ENCODE measurements at regions of chr3 and their contacts with region 1.

Region 1: GRCh38 chr3:32570421-32571191 is at the start of gene DYNC1LI1:
- DNase-seq: peak; percentile 81 to 96
- H3K4me3 ChIP-seq: peak within 1 kb of the TSS; percentile 89 to 92
- H3K27ac ChIP-seq: peak within 1 kb of the TSS; percentile 96 to 100
- H3K4me1 ChIP-seq: peaks cover 0 to 7% of the 10 kb centered on the region in 2 donors
- H3K27me3 ChIP-seq: no peaks in the 10 kb centered on the region
- CTCF ChIP-seq: no peak
- total RNA-seq, gene DYNC1LI1: 22.1 TPM

Region 2: DNA sequence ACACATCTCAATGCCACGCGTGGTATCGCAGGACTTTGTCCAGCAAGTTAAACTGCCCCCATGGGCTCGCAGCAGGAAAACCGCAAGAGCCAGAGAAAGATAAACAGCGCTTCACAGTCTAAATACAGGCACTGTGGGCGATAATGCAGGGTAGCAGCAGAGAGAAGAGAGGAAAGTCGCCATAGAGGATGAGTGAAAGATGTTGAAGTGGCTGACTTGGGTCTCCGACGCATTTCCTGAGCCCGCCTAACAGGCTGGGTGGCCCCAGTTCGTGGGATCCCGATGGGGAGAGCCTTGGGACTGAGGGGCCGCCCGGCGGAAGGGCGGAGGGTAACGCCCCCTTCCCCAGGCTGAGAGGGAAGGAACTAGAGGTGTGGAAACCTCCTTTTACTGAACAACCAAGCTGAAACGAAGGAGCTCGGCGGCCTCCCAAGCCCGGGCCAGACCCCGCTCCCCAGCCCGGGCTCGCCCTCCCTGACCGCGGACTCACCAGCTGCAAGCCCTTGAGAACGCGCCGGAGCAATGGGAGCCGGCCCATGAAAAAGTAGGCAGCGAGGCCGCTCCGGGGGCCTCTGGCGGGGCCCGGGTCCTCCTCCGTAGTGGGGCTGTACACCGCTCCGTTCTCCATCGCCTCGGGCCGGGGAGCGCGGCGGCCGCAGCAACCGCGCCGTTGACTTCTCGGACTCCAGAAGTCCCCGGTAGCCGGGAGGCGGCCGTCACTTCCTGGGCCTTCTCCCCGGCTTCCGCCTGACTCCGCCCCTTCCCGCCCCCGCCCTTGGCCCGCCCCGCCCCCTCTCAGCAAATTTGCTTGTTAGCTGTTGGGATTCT is 68.3 kb before region 1 on chr3 and contains the start of gene CMTM6:
- intact Hi-C with region 1: loop called (anchors 2 kb)
- DNase-seq: peak; percentile 21 to 88
- H3K4me3 ChIP-seq: peak within 1 kb of the TSS; percentile 70 to 85
- H3K27ac ChIP-seq: peak within 1 kb of the TSS; percentile 95 to 99
- H3K4me1 ChIP-seq: peaks cover 0 to 10% of the 10 kb centered on the region in 2 donors
- H3K27me3 ChIP-seq: no peaks in the 10 kb centered on the region
- CTCF ChIP-seq: no peak
- total RNA-seq, gene CMTM6: 12.7 TPM

Region 3: DNA sequence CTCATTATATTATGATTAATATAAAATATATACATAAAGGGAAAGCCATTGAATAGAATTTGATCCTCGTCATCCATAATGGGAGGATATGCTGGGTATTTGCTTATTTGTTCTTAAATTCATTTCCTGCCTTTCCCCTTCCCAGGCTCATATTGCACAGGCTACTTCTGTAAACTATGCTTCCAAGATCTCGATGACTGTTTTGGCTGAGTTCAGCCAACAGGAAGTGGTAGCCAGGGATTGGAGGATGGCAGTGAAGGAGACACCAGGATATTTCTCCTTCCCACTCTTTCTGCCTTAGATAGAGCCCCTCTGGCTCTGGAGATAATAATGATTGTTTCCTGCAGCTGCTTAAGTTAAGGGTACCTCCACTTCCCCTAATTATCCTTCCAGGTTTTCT is 44.4 kb after region 1 on chr3:
- intact Hi-C with region 1: loop called (anchors 5 kb)
- DNase-seq: no peak
- H3K4me3 ChIP-seq: no peak overlapping the region
- H3K27ac ChIP-seq: no peak overlapping the region
- H3K4me1 ChIP-seq: peaks cover 0 to 7% of the 10 kb centered on the region in 2 donors
- H3K27me3 ChIP-seq: no peaks in the 10 kb centered on the region
- CTCF ChIP-seq: no peak

Region 4: GRCh38 chr3:32646761-32647160 is 76.2 kb after region 1 on chr3:
- intact Hi-C with region 1: no loop called
- DNase-seq: no peak
- H3K4me3 ChIP-seq: no peak overlapping the region
- H3K27ac ChIP-seq: no peak overlapping the region
- H3K4me1 ChIP-seq: no peaks in the 10 kb centered on the region
- H3K27me3 ChIP-seq: no peaks in the 10 kb centered on the region
- CTCF ChIP-seq: no peak

Region 5: GRCh38 chr3:32684800-32685542 is 114.4 kb after region 1 on chr3 and contains the start of gene CNOT10:
- intact Hi-C with region 1: loop called (anchors 5 kb)
- DNase-seq: peak; percentile 86 to 97
- H3K4me3 ChIP-seq: peak within 1 kb of the TSS; percentile 75 to 95
- H3K27ac ChIP-seq: peak within 1 kb of the TSS; percentile 86 to 89
- H3K4me1 ChIP-seq: peaks cover 0 to 18% of the 10 kb centered on the region in 2 donors
- H3K27me3 ChIP-seq: no peaks in the 10 kb centered on the region
- CTCF ChIP-seq: peak in 2 of 3 experiments; percentile 16 to 17
- total RNA-seq, gene CNOT10: 7.6 TPM

Region 6: DNA sequence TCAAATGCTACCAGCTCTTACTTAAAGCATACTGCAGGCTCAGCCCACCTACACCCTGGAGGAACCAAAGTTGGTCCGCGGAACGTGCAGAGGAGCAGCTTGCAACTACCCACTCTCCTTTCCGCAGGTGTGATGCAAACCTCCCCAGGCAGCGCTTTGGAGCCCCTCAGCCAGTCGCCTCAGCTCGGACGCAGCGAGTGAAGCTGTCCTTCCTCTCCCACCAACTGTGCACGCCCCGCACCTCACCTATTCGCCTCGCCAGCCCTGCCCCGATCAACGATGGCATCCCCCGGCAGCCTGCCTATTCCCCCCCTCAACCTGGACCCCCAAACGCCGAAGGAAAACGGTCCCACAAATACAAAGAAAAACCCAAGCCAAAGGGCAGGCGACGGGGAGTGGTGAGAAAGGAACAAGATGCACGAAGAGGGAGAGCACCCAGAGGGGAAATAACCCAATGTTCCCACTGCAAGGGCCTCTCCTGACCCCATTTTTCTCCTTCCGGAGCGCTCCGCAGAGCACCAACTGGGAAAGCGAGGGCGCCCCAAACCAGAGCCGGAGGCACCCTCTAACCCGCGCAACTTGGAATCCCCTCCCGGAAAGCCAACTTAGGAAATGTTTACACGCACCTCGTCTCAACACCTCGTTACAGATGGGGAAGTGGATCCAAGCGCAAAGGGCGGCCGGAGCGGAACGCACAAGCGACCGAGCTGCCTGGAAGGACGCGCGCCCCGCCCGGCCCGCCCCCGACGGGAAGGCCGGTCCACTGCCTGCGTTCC is 525.7 kb after region 1 on chr3:
- intact Hi-C with region 1: loop called (anchors 5 kb)
- DNase-seq: peak in 1 of 2 donors; percentile 78
- H3K4me3 ChIP-seq: peak overlapping the region; percentile 68 to 91
- H3K27ac ChIP-seq: peak overlapping the region; percentile 93 to 96
- H3K4me1 ChIP-seq: peaks cover 0 to 9% of the 10 kb centered on the region in 2 donors
- H3K27me3 ChIP-seq: no peaks in the 10 kb centered on the region
- CTCF ChIP-seq: no peak